CD8-positive, alpha-beta T cell (primary cell): ENCODE measurements at regions of chr14 and their contacts with region 1.

Region 1: DNA sequence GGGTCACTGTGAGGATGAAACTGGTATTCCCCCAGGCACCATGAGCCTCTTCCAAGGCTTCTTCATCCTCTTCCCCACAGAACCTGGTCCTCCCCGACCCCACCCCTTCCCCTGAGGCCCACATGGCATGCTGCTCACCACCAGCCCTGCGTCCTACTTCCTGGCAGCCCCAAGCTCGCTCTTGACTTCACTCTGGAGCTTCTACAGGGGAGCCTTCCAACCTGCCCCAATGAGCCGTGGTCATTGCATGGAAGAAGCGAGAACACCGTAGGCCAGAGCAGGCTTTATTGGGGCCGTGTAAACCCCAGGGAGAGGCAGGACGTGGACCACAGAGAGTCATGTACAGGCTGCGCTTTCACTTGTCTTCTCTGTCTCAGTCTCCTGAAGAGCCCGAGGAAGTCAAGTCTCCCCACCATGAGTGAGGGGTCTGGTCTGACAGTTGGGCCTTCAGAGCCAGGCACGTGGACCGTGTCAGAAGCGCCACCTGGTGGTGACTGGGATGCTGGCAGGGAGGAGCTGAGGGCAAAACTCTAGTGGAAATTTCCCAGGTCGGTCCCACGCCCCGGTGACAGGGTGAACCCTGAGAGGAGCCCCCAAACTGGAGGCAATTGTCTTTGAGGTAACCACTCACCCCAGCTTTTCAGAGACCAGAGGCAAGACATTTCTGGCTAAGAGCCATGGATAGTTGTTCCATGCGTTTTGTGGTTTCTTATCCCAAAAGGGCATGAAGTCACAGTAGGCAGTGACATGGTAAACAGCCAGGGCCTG is 17.5 kb downstream of the RPS6KL1 start:
- DNase-seq: peak; percentile 58 to 89 (median 81)
- ATAC-seq: peak; percentile 82
- H3K4me3 ChIP-seq: no peak overlapping the region
- H3K4me3 Mint-ChIP-seq: no peak overlapping the region
- H3K27ac ChIP-seq: peak overlapping the region in 1 of 2 experiments; percentile 3
- H3K27ac Mint-ChIP-seq: peak overlapping the region; percentile 55
- H3K4me1 ChIP-seq: peaks cover 5% of the 10 kb centered on the region
- H3K4me1 Mint-ChIP-seq: peaks cover 7% of the 10 kb centered on the region
- H3K27me3 ChIP-seq: no peaks in the 10 kb centered on the region
- H3K27me3 Mint-ChIP-seq: no peaks in the 10 kb centered on the region
- CTCF ChIP-seq: peak; percentile 89

Region 2: DNA sequence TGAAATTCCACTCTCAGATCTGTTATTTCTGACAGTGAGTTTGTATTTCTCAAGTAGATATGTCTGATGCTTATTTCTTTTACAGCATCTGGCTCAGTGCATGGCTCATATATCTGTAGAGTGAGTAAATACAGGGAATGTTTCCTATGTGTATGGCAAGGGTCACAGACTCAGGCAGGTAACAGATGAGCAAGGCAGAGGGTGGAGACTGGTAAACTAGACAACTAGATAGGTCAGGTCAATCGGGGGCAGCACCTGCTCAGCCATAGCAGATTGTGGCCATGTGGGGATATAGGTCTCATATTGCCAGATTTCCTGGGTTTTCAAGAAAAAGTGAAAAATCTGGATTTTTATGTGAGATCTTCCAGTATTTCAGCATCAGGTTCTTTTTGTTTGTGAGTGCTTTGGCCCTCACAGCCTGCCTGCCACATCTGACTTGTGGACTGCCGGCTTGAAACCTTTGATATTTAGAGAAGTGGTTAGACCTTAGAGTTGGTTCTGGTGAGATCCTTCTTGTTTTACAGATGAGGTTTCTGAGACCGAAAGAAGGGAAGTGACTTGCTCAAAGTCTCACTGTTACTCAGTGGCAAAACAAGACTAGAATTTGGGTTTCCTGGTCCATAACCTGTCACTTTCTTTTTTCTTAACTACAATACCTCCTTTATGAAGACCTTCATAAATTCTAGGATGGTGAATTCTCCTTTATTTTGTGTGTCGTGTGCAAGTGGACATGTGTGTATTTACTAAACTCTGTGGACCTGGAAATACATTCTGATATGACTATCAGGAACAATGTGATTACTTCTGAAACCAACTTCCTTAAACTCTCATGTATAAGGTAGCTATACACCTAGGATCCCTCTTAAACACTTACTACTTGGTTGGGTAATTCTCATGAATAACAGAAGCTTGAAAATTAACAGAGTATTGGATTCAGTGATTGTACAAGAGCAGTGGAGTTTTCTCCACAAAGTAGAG is 64.0 kb before region 1 on chr14:
- CTCF ChIA-PET with region 1: interaction called, 10 read pairs
- POLR2A ChIA-PET with region 1: no interaction called
- intact Hi-C with region 1: no loop called
- DNase-seq: peak in 2 of 9 experiments; percentile 17 to 56
- ATAC-seq: peak; percentile 33
- H3K4me3 ChIP-seq: no peak overlapping the region
- H3K4me3 Mint-ChIP-seq: no peak overlapping the region
- H3K27ac ChIP-seq: peak overlapping the region in 1 of 2 experiments; percentile 71
- H3K27ac Mint-ChIP-seq: peak overlapping the region; percentile 82
- H3K4me1 ChIP-seq: peaks cover 54% of the 10 kb centered on the region
- H3K4me1 Mint-ChIP-seq: peaks cover 65% of the 10 kb centered on the region
- H3K27me3 ChIP-seq: no peaks in the 10 kb centered on the region
- H3K27me3 Mint-ChIP-seq: no peaks in the 10 kb centered on the region
- CTCF ChIP-seq: no peak

Region 3: GRCh38 chr14:74860906-74861733 is 44.4 kb before region 1 on chr14:
- CTCF ChIA-PET with region 1: interaction called, 725 read pairs
- POLR2A ChIA-PET with region 1: interaction called, 63 read pairs
- intact Hi-C with region 1: loop called (anchors 1 kb)
- DNase-seq: peak; percentile 85 to 99 (median 90)
- ATAC-seq: peak; percentile 84
- H3K4me3 ChIP-seq: no peak overlapping the region
- H3K4me3 Mint-ChIP-seq: no peak overlapping the region
- H3K27ac ChIP-seq: no peak overlapping the region
- H3K27ac Mint-ChIP-seq: no peak overlapping the region
- H3K4me1 ChIP-seq: peaks cover 4% of the 10 kb centered on the region
- H3K4me1 Mint-ChIP-seq: peaks cover 7% of the 10 kb centered on the region
- H3K27me3 ChIP-seq: no peaks in the 10 kb centered on the region
- H3K27me3 Mint-ChIP-seq: no peaks in the 10 kb centered on the region
- CTCF ChIP-seq: peak; percentile 85

Region 4: GRCh38 chr14:74881431-74882361 is 23.9 kb before region 1 on chr14 and contains the start of gene DLST:
- CTCF ChIA-PET with region 1: interaction called, 85 read pairs
- POLR2A ChIA-PET with region 1: interaction called, 6 read pairs
- intact Hi-C with region 1: loop called in 1 of 2 experiments (anchors 1 kb)
- DNase-seq: peak; percentile 74 to 92 (median 85)
- ATAC-seq: peak; percentile 76
- H3K4me3 ChIP-seq: peak within 1 kb of the TSS; percentile 62 to 80
- H3K4me3 Mint-ChIP-seq: peak within 1 kb of the TSS; percentile 99
- H3K27ac ChIP-seq: peak within 1 kb of the TSS; percentile 82 to 90
- H3K27ac Mint-ChIP-seq: peak within 1 kb of the TSS; percentile 100
- H3K4me1 ChIP-seq: peaks cover 44% of the 10 kb centered on the region
- H3K4me1 Mint-ChIP-seq: peaks cover 62% of the 10 kb centered on the region
- H3K27me3 ChIP-seq: no peaks in the 10 kb centered on the region
- H3K27me3 Mint-ChIP-seq: no peaks in the 10 kb centered on the region
- CTCF ChIP-seq: no peak
- total RNA-seq, gene DLST: 142 to 156 TPM

Region 5: GRCh38 chr14:74922739-74923401 is 17.3 kb after region 1 on chr14 and contains the start of gene RPS6KL1:
- CTCF ChIA-PET with region 1: interaction called, 16 read pairs
- POLR2A ChIA-PET with region 1: no interaction called
- intact Hi-C with region 1: no loop called
- DNase-seq: peak; percentile 26 to 78 (median 66)
- ATAC-seq: peak; percentile 96
- H3K4me3 ChIP-seq: peak within 1 kb of the TSS; percentile 36 to 65
- H3K4me3 Mint-ChIP-seq: peak within 1 kb of the TSS; percentile 76
- H3K27ac ChIP-seq: peak within 1 kb of the TSS in 1 of 2 experiments; percentile 47
- H3K27ac Mint-ChIP-seq: no peak within 1 kb of the TSS
- H3K4me1 ChIP-seq: peaks cover 12% of the 10 kb centered on the region
- H3K4me1 Mint-ChIP-seq: peaks cover 14% of the 10 kb centered on the region
- H3K27me3 ChIP-seq: peaks cover 0 to 4% of the 10 kb centered on the region in 2 experiments
- H3K27me3 Mint-ChIP-seq: peaks cover 13% of the 10 kb centered on the region
- CTCF ChIP-seq: no peak
- total RNA-seq, gene RPS6KL1: 8.9 to 10.8 TPM